SK-N-SH (cell line): ENCODE measurements at regions of chr1 and their contacts with region 1.

Region 1: DNA sequence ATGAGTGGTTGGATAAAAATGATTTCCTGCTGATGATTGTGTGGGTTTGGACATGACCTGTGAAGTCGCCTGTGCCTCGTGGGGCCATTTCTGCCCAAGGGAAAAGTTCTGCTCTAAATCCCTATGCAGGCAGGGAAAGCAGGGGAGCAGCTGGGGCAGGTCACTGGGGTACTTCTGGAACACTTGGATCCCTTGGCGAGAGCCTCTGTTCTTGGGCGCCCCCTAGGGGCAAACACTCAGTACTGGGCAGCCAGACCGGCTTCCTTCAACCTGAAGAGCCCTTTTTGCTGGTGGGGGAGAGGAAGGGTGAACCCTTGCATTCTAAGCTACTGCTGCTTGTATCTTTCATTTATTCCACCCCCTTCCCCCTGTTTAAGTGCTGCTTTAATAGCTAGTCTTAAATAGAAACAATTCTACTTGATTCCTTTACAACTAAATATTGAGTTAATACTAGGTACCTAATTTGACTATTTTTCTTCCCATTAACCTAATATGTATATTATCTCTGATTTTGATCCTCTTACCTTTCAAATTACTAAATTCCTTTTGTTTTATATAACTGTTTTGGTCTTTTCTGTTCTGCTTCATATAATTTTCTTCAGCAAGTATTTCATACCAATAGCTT is 5.1 kb upstream of the CLEC20A start:
- DNase-seq: peak; percentile 85
- H3K4me3 ChIP-seq: no peak overlapping the region; a peak in 1 of 4 replicates
- H3K27ac ChIP-seq: no peak overlapping the region
- H3K4me1 ChIP-seq: no peaks in the 10 kb centered on the region; a peak in 1 of 4 replicates
- H3K27me3 ChIP-seq: no peaks in the 10 kb centered on the region
- CTCF ChIP-seq: peak; percentile 91
- EP300 ChIP-seq: no peak
- RAD21 ChIP-seq: peak; percentile 69

Region 2: GRCh38 chr1:178300352-178300699 is 201.5 kb before region 1 on chr1:
- CTCF ChIA-PET with region 1: interaction called, 22 read pairs
- POLR2A ChIA-PET with region 1: no interaction called
- DNase-seq: no peak
- H3K4me3 ChIP-seq: no peak overlapping the region; a peak in 1 of 4 replicates
- H3K27ac ChIP-seq: peak overlapping the region; percentile 15 to 80; a peak in 3 of 4 replicates
- H3K4me1 ChIP-seq: peaks cover 3 to 4% of the 10 kb centered on the region in 2 experiments; a peak in 2 of 4 replicates
- H3K27me3 ChIP-seq: no peaks in the 10 kb centered on the region
- CTCF ChIP-seq: no peak
- EP300 ChIP-seq: no peak
- RAD21 ChIP-seq: no peak

Region 3: GRCh38 chr1:178310685-178311105 is 191.1 kb before region 1 on chr1:
- CTCF ChIA-PET with region 1: interaction called, 24 read pairs
- POLR2A ChIA-PET with region 1: no interaction called
- DNase-seq: peak; percentile 50
- H3K4me3 ChIP-seq: no peak overlapping the region
- H3K27ac ChIP-seq: no peak overlapping the region
- H3K4me1 ChIP-seq: no peaks in the 10 kb centered on the region; a peak in 1 of 4 replicates
- H3K27me3 ChIP-seq: no peaks in the 10 kb centered on the region
- CTCF ChIP-seq: peak; percentile 85
- EP300 ChIP-seq: no peak
- RAD21 ChIP-seq: peak; percentile 85

Region 4: GRCh38 chr1:178324003-178324402 is 177.8 kb before region 1 on chr1:
- CTCF ChIA-PET with region 1: interaction called, 10 read pairs
- POLR2A ChIA-PET with region 1: no interaction called
- DNase-seq: no peak
- H3K4me3 ChIP-seq: no peak overlapping the region
- H3K27ac ChIP-seq: no peak overlapping the region
- H3K4me1 ChIP-seq: no peaks in the 10 kb centered on the region
- H3K27me3 ChIP-seq: no peaks in the 10 kb centered on the region
- CTCF ChIP-seq: no peak
- EP300 ChIP-seq: no peak
- RAD21 ChIP-seq: no peak

Region 5: GRCh38 chr1:178486100-178487069 is 15.4 kb before region 1 on chr1:
- CTCF ChIA-PET with region 1: interaction called, 21 read pairs
- POLR2A ChIA-PET with region 1: no interaction called
- DNase-seq: no peak
- H3K4me3 ChIP-seq: no peak overlapping the region
- H3K27ac ChIP-seq: no peak overlapping the region
- H3K4me1 ChIP-seq: peaks cover 0 to 4% of the 10 kb centered on the region in 2 experiments; a peak in 1 of 4 replicates
- H3K27me3 ChIP-seq: no peaks in the 10 kb centered on the region
- CTCF ChIP-seq: no peak
- EP300 ChIP-seq: no peak
- RAD21 ChIP-seq: no peak

Region 6: GRCh38 chr1:178516110-178516509 is 14.3 kb after region 1 on chr1:
- CTCF ChIA-PET with region 1: interaction called, 23 read pairs
- POLR2A ChIA-PET with region 1: no interaction called
- DNase-seq: no peak
- H3K4me3 ChIP-seq: no peak overlapping the region
- H3K27ac ChIP-seq: no peak overlapping the region
- H3K4me1 ChIP-seq: peaks cover 0 to 2% of the 10 kb centered on the region in 2 experiments; a peak in 1 of 4 replicates
- H3K27me3 ChIP-seq: no peaks in the 10 kb centered on the region
- CTCF ChIP-seq: no peak
- EP300 ChIP-seq: no peak
- RAD21 ChIP-seq: no peak